Activated CD4-positive, alpha-beta memory T cell treated with anti-CD3 and anti-CD28 coated beads for 36 hours (primary cell): ENCODE measurements at regions of chr20 and their contacts with region 1.

Region 1: DNA sequence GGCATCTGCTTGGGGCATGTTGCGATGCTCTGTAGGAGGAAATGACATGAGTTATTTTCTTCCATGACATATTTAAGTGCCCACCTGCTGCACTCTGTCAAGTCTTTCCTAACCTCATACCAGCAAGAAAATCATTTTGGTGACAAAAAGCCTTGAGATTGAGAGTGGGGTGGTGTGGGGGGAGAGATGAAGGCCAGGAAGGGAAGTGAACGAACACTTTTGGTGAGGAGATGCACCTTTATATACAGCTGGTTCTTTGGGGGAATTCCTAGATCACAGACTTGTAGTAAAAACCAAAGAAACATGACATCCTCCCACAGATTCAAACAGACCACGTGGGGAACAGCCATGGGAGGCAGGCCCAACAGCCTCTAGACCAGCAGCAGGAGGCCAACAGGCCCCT is 26.1 kb downstream of the NCOA5 start:
- DNase-seq: peak; percentile 41
- H3K4me3 Mint-ChIP-seq: no peak overlapping the region
- H3K27ac Mint-ChIP-seq: peak overlapping the region; percentile 68
- H3K4me1 Mint-ChIP-seq: peaks cover 58% of the 10 kb centered on the region
- H3K27me3 Mint-ChIP-seq: no peaks in the 10 kb centered on the region

Region 2: GRCh38 chr20:46089417-46090388 is 26.1 kb after region 1 on chr20 and contains the start of gene NCOA5:
- CTCF ChIA-PET with region 1: no interaction called
- POLR2A ChIA-PET with region 1: interaction called, 3 read pairs
- intact Hi-C with region 1: loop called (anchors 2 kb)
- DNase-seq: peak; percentile 97
- H3K4me3 Mint-ChIP-seq: peak within 1 kb of the TSS; percentile 88
- H3K27ac Mint-ChIP-seq: peak within 1 kb of the TSS; percentile 83
- H3K4me1 Mint-ChIP-seq: peaks cover 49% of the 10 kb centered on the region
- H3K27me3 Mint-ChIP-seq: no peaks in the 10 kb centered on the region
- total RNA-seq, gene NCOA5: 13.1 to 13.7 TPM